ENCODE measurements at regions of chr4 and their contacts with region 1.

Region 1: GRCh38 chr4:107709916-107710315 is 10.1 kb downstream of the PAPSS1 start:
- DNase-seq: no peak
- H3K4me3 ChIP-seq: no peak overlapping the region
- H3K27ac ChIP-seq: no peak overlapping the region
- H3K4me1 ChIP-seq: no peaks in the 10 kb centered on the region
- CTCF ChIP-seq: no peak

Region 2: DNA sequence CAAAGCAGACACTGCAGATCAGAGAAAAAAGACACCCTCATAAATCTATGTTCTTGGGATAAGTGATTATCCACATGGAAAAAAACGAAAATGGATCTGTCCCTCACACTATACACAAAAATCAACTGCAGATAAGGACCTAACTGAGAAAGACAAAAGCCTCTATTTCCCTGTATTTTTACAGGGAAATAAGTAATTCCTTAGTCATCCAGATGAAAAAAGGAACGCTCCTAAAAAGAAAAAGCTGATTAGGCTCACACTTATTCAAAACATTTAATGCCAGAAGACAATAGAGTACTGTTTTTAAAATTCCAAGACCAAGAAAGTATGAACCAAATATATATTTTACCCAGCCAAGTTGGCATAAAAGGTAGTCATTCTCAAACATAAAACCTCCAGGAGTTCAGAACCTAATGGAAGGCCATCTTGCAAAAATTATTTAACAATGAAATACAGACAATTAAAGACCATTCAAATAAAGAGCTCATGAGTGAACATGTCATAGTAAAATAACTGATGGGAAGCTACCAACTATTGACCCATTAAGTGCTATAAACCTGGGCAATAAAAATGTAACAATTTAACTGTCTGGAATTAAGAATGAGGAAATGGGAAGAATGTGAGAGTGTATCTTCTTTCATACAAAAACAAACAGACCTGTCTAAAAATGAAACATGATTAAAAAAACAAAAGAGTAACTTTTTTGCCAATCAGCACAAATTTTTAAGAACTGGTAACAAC is 10.3 kb before region 1 on chr4:
- CTCF ChIA-PET with region 1: no interaction called
- POLR2A ChIA-PET with region 1: interaction called, 13 read pairs
- intact Hi-C with region 1: no loop called
- DNase-seq: no peak
- H3K4me3 ChIP-seq: no peak overlapping the region
- H3K27ac ChIP-seq: no peak overlapping the region
- H3K4me1 ChIP-seq: no peaks in the 10 kb centered on the region
- CTCF ChIP-seq: no peak

Measured in OCI-LY7 (cell line).